AG04450 (cell line): ENCODE measurements at regions of chr17 and their contacts with region 1.

Region 1: GRCh38 chr17:45277216-45277849 is 15.4 kb upstream of the SPATA32 start:
- DNase-seq: peak; percentile 81
- H3K4me3 ChIP-seq: no peak overlapping the region
- H3K27ac ChIP-seq: peak overlapping the region; percentile 31
- H3K27me3 ChIP-seq: no peaks in the 10 kb centered on the region
- CTCF ChIP-seq: peak; percentile 91

Region 2: DNA sequence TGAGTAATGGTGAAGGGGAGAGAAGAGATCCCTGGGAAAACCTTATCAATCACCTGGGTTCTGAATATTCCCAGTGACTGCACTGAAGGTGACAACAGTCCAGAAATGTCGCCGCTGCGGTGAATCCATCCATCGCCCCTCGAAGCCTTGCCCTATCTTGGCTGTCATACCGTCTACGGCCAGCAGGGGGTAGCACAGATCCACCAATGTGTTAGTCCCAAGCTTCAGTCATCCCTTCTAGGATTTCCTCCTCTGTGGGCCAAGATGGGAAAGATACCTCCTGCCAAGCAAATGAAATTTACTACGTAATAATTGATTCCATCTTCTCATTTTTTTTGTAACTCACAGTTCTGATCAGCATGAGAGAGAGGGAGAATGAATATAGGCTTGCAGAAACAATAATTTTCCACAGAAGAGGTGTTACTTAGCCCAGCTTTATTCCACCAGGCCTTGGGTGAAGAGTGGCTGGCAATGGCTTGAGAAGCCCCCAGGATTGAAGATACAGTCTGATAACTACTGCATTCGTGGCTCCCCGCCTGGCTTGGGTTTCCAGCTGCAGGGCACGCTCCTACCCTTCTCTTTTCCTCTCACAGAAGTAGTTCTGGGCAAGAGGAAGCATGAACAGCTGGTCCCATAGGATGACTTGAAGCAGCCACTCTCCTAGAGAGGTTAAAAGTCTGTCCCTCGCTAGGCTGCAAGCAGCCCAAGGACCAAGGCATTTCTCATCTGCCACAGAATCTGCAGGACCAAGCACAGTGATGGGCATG is 58.3 kb before region 1 on chr17:
- CTCF ChIA-PET with region 1: interaction called, 36 read pairs
- POLR2A ChIA-PET with region 1: interaction called, 4 read pairs
- DNase-seq: peak; percentile 61
- H3K4me3 ChIP-seq: peak overlapping the region; percentile 27; the same call in 1 of the 2 replicates
- H3K27ac ChIP-seq: no peak overlapping the region
- H3K27me3 ChIP-seq: peaks cover 24% of the 10 kb centered on the region
- CTCF ChIP-seq: peak; percentile 88

Region 3: DNA sequence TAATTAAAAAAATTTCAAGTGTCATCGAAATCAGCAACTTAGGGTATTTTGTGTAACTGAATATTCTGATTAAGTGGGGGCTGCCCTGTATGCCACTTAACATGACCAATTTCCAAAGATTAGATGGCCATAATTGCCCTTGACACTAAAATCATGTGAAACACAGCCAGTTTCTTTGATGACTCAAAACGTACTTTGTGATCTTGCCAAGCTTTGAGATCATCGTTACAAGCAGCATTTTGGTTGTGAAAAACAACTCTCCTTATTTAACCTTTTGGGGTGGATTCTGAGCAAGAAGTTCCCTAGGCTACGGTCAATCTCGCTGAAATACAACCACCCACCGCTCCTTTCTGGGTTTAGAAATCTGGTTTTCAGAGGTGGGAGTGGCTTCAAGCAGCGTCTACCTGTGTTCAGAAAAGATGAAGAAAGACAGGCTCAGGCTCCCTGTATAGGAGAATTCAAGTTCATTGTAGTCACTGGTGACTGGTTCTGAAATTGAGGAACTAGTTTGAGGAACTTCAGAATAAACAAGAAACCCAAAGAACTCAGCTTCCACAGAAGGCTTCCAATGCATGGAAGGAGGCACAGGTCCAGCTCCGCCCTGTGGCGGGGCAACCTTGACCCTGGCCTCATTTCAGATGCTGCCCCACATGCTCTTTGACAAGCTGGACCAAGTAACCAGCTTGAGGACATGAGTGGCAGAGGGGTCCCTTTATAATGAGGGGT is 30.1 kb after region 1 on chr17:
- CTCF ChIA-PET with region 1: interaction called, 24 read pairs
- POLR2A ChIA-PET with region 1: interaction called, 3 read pairs
- DNase-seq: peak; percentile 53
- H3K4me3 ChIP-seq: no peak overlapping the region
- H3K27ac ChIP-seq: peak overlapping the region; percentile 89
- H3K27me3 ChIP-seq: no peaks in the 10 kb centered on the region
- CTCF ChIP-seq: no peak

Region 4: GRCh38 chr17:45364531-45365390 is 87.4 kb after region 1 on chr17:
- CTCF ChIA-PET with region 1: interaction called, 8 read pairs
- POLR2A ChIA-PET with region 1: interaction called, 11 read pairs
- DNase-seq: no peak
- H3K4me3 ChIP-seq: no peak overlapping the region
- H3K27ac ChIP-seq: no peak overlapping the region
- H3K27me3 ChIP-seq: no peaks in the 10 kb centered on the region
- CTCF ChIP-seq: 0 out of 2 replicates have a peak, but pooled peaks have one; percentile 6

Region 5: DNA sequence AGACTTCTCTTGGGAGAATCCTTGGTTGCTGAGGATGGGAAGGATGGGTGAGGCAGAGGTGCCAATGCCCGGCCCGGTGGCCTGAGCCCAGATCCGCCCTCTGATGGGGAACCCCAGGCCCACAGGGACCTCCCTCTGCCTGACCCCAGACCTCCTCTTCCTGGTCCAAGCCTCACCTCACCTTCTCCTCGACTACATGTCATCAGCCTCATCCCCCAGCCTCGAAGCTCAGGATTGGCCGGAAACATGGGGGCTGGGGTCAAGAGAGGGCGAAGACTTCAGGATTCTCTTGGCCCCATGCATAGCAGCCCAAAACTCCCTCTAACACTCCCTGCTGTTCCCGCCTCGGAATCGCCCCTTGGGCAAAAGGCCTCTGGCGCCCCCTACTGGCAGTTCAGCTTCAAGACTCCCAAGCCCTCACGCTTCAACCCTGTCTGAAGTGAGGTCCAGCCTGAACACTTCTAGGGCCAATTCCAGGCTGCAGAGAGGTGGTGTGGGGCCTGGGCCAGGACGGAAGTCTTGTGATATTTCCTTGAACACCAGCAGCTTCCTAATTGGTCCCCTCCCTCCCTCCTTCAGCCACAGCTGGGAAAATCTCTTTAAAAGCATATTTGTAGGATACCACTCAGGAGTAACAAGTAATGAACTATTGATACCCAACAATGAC is 108.1 kb after region 1 on chr17:
- CTCF ChIA-PET with region 1: interaction called, 105 read pairs
- POLR2A ChIA-PET with region 1: interaction called, 3 read pairs
- DNase-seq: peak; percentile 53
- H3K4me3 ChIP-seq: no peak overlapping the region
- H3K27ac ChIP-seq: no peak overlapping the region
- H3K27me3 ChIP-seq: no peaks in the 10 kb centered on the region
- CTCF ChIP-seq: peak; percentile 99